ENCODE measurements at regions of chr7 and their contacts with region 1.

Region 1: GRCh38 chr7:5526100-5526905 is 102.7 kb upstream of the TNRC18 start:
- H3K4me3 ChIP-seq: no peak overlapping the region
- H3K27ac ChIP-seq: peak overlapping the region; percentile 75
- H3K4me1 ChIP-seq: no peaks in the 10 kb centered on the region
- CTCF ChIP-seq: no peak; the same call in 1 of the 2 replicates

Region 2: GRCh38 chr7:5320802-5321396 is 205.4 kb before region 1 on chr7:
- CTCF ChIA-PET with region 1: no interaction called
- POLR2A ChIA-PET with region 1: no interaction called
- H3K4me3 ChIP-seq: no peak overlapping the region
- H3K27ac ChIP-seq: no peak overlapping the region
- H3K4me1 ChIP-seq: no peaks in the 10 kb centered on the region
- CTCF ChIP-seq: no peak

Region 3: DNA sequence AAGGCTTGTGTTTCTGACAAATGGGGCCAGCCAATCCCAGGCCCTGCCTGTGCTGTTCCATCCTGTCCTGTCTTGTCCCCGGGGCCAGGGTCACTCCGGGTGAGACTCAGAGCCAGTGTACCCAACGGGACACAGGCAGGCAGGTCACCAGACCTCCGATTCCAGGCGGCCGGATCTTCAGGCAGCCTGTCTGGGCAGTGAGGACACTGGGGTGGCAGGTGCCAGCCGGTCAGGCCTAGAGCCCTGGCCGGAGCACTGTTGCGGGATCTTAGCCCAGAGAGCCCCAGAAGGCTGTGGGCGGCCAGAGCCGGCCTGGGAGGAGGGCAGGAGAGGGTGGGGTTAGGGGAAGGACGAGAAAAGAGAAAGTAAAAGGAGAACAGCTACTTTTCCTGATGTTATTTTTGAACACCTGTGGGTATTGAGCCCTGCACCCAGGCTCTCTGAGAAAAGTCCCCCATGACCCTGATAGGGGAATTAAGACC is 31.7 kb after region 1 on chr7:
- CTCF ChIA-PET with region 1: interaction called, 11 read pairs
- POLR2A ChIA-PET with region 1: interaction called, 24 read pairs
- H3K4me3 ChIP-seq: no peak overlapping the region
- H3K27ac ChIP-seq: no peak overlapping the region
- H3K4me1 ChIP-seq: 0 out of 2 replicates have a peak, but pooled peaks cover 2% of the 10 kb centered on the region
- CTCF ChIP-seq: no peak

Region 4: DNA sequence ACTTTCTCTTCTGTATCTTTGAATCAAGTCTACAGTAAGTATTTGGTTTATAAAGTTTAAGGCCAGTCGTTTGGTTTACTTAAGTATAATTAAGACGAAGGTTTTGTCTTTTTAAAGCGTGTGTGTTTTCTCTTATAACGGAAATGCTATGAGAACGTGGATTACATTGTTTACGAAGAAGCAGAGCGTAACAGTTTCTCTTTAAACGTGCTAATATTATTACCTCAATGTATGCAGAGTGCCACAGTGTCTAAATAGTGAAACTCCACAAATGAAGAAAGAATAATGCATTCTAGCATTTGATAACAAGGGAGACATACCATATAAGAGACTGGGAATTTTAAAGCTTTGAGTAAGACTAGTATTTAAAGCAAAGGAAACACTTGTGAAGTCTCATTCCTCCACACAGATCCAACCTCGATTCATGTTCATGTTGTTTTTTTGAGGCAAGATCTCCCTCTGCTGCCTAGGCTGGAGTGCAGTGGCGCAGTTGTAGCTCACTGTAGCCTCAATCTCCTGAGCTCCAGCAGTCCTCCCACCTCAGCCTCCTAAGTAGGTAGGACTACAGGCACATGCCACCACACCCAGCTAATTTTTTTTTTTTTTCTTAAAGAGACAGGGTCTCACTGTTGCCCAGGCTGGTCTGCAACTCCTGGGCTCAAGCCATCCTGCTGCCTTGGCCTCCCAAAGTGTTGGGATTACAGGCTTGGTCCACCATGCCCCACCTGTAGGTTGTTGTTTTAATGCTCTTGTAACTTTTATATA is 580.0 kb after region 1 on chr7:
- CTCF ChIA-PET with region 1: no interaction called
- POLR2A ChIA-PET with region 1: no interaction called
- H3K4me3 ChIP-seq: peak overlapping the region; percentile 67
- H3K27ac ChIP-seq: no peak overlapping the region
- H3K4me1 ChIP-seq: no peaks in the 10 kb centered on the region
- CTCF ChIP-seq: peak; percentile 46; the same call in 1 of the 2 replicates

Measured in HEK293 (cell line).